Astrocyte of the cerebellum (primary cell): ENCODE measurements at regions of chr18 and their contacts with region 1.

Region 1: DNA sequence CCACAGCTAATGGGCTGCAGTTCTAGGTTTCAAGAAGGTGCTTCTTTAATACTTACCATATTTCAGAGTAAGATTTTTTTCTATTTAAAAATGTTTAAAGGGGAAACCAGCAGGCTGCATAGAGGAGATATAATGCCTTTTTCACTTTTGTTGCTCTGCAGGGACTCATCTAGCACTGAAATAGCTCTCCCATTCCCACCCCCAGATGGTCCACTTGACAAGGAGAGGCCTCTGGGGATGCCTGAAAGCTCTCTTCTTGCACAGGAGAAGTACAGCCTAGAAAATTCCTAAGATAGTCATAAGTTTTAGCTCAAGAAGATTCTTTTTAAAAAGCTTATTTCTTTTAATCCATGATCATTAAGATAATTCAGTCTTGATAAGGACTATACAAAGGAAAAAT is 126.4 kb downstream of the CDH2 start:
- DNase-seq: no peak
- H3K4me3 ChIP-seq: no peak overlapping the region
- CTCF ChIP-seq: no peak

Region 2: GRCh38 chr18:27652480-27653121 is 397.9 kb before region 1 on chr18:
- in situ Hi-C with region 1: no loop called
- DNase-seq: no peak
- H3K4me3 ChIP-seq: no peak overlapping the region
- CTCF ChIP-seq: no peak

Region 3: DNA sequence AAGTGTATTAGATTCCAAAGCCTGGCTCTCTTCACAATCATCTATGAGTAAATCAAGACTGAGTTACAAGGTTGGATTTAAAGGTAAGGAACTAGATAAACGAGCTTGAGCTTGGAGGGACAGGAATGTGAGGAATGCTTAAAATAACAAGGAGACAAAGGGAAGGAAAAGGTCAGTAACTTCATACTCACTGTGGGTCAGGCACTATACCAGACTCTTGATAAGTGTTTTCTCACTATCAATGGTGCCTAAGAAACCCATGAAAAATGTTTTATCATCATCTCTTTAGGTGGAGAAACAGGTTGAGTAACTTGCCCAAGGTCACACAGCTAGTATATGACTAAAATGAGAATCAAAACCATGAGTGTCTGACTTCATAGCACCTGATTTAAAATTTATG is 85.7 kb before region 1 on chr18:
- in situ Hi-C with region 1: no loop called
- DNase-seq: no peak
- H3K4me3 ChIP-seq: no peak overlapping the region
- CTCF ChIP-seq: no peak

Region 4: DNA sequence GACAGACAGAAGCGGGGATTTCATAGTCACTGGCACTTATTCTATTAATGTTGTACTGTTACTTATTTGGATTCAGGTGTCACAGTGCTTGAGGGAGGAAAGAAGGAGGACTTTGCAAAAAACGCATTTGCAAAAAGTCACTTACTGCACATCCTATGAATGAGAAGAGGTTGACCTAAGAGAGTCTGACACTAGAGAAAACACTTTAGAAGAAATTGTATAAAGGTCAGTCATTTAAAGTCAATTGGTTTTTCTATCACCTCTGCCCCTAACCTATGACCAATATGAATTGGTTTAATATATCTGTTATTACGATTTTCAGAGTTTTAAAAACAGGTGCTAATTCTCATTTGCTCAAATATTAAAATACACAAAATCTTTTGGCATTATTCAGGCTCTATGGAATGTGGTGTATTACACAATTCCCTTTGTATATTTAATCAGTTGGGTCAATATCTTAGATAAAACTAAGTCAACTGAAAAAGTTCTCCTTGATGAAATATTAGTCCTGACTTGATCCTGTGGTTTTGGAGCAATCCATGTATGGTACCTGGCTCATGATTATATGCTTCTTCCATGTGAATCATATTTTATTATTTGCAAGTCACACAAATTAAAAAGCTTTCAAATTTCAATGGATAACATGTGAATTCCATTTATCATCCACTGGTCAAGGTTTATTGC is 31.0 kb before region 1 on chr18:
- in situ Hi-C with region 1: loop called (anchors 5 kb)
- DNase-seq: no peak
- H3K4me3 ChIP-seq: no peak overlapping the region
- CTCF ChIP-seq: no peak

Region 5: GRCh38 chr18:28124131-28125029 is 73.8 kb after region 1 on chr18:
- in situ Hi-C with region 1: no loop called
- DNase-seq: peak; percentile 24
- H3K4me3 ChIP-seq: no peak overlapping the region
- CTCF ChIP-seq: no peak

Region 6: DNA sequence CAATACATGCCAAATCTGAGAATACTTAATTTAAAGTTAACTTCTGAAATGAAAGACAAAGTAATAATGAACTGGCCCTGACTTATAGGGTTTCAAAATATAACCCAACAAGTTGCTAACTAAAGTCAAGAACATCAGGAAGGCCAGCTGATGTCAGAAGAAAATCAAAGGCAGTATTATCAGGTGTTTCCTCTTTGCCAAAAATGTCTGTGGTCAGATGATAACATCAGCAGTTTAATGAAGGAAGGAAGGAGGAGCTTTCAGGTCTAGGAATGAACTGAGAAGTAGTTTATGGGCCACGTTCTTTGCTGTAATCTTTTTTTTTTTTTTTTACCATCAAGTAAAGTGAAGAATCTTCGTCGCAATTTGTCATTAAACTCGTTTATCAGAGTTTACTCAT is 85.5 kb after region 1 on chr18:
- in situ Hi-C with region 1: no loop called
- DNase-seq: no peak
- H3K4me3 ChIP-seq: no peak overlapping the region
- CTCF ChIP-seq: no peak